ENCODE measurements at regions of chr3 and their contacts with region 1.

Region 1: GRCh38 chr3:45656575-45657363 is 32.4 kb upstream of the SACM1L start:
- DNase-seq: peak; percentile 89
- H3K4me3 Mint-ChIP-seq: no peak overlapping the region
- H3K27ac Mint-ChIP-seq: no peak overlapping the region
- H3K4me1 Mint-ChIP-seq: peaks cover 22% of the 10 kb centered on the region
- H3K27me3 Mint-ChIP-seq: no peaks in the 10 kb centered on the region

Region 2: DNA sequence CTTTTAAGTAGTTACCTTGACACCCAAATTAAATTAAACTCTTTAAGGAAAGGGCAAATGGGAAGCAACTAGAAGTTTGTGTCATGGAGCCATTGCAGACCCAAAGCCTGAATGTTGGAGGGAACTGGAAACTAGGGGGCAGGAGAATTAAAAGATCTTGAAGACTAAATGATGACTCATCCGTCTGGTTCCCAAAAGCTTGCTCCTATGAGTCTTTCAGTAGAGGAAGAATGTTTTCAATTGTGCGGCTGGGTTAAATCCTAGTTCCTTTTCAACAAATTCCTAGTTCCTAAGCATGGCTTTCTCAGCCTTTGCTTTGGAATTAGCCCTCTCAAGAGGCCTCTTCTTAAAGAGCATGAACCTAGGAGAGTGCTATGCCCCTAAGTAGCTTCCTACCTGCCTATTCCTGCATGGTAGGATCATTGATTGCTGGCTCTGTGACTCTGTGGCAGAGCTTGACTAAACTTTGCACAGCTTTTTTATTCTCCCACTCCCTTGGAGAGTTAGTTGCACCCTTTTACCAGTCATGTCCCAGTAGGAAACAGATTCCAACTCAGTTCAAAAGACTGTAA is 613.0 kb before region 1 on chr3:
- CTCF ChIA-PET with region 1: interaction called, 15 read pairs
- POLR2A ChIA-PET with region 1: interaction called, 3 read pairs
- DNase-seq: no peak
- H3K4me3 Mint-ChIP-seq: no peak overlapping the region
- H3K27ac Mint-ChIP-seq: no peak overlapping the region
- H3K4me1 Mint-ChIP-seq: peaks cover 21% of the 10 kb centered on the region
- H3K27me3 Mint-ChIP-seq: peaks cover 25% of the 10 kb centered on the region

Region 3: GRCh38 chr3:45462522-45463265 is 194.1 kb before region 1 on chr3:
- CTCF ChIA-PET with region 1: no interaction called
- POLR2A ChIA-PET with region 1: no interaction called
- DNase-seq: no peak
- H3K4me3 Mint-ChIP-seq: no peak overlapping the region
- H3K27ac Mint-ChIP-seq: no peak overlapping the region
- H3K4me1 Mint-ChIP-seq: peaks cover 19% of the 10 kb centered on the region
- H3K27me3 Mint-ChIP-seq: no peaks in the 10 kb centered on the region

Region 4: GRCh38 chr3:45507820-45508317 is 148.9 kb before region 1 on chr3:
- CTCF ChIA-PET with region 1: interaction called, 48 read pairs
- POLR2A ChIA-PET with region 1: no interaction called
- DNase-seq: no peak
- H3K4me3 Mint-ChIP-seq: no peak overlapping the region
- H3K27ac Mint-ChIP-seq: no peak overlapping the region
- H3K4me1 Mint-ChIP-seq: no peaks in the 10 kb centered on the region
- H3K27me3 Mint-ChIP-seq: no peaks in the 10 kb centered on the region

Region 5: GRCh38 chr3:45546716-45547701 is 109.8 kb before region 1 on chr3:
- CTCF ChIA-PET with region 1: interaction called, 11 read pairs
- POLR2A ChIA-PET with region 1: no interaction called
- DNase-seq: peak; percentile 32
- H3K4me3 Mint-ChIP-seq: no peak overlapping the region
- H3K27ac Mint-ChIP-seq: no peak overlapping the region
- H3K4me1 Mint-ChIP-seq: no peaks in the 10 kb centered on the region
- H3K27me3 Mint-ChIP-seq: no peaks in the 10 kb centered on the region

Region 6: GRCh38 chr3:45593708-45594609 is 62.8 kb before region 1 on chr3:
- CTCF ChIA-PET with region 1: interaction called, 25 read pairs
- POLR2A ChIA-PET with region 1: interaction called, 5 read pairs
- DNase-seq: peak; percentile 79
- H3K4me3 Mint-ChIP-seq: peak overlapping the region; percentile 89
- H3K27ac Mint-ChIP-seq: peak overlapping the region; percentile 81
- H3K4me1 Mint-ChIP-seq: peaks cover 54% of the 10 kb centered on the region
- H3K27me3 Mint-ChIP-seq: peaks cover 5% of the 10 kb centered on the region

Region 7: DNA sequence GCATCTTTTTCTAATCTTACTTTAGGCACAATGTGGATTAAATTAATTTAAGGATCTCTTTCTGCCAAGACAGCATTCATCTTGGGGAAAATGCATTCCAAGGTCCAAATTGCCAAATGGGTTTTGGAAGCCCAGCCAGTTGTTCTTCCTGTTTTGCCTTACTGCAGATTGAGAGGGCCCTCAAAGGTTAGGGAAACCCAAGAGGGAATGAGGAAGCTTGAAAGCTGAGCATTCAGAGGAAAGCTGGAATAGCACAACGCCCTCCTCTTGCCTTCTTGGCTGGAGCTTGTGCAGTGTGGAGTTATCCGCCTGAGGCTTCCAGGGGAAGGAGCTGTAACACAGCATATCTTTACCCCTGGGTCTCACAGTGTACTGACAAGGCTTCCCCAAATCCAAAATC is 14.2 kb after region 1 on chr3:
- CTCF ChIA-PET with region 1: interaction called, 17 read pairs
- POLR2A ChIA-PET with region 1: interaction called, 3 read pairs
- DNase-seq: no peak
- H3K4me3 Mint-ChIP-seq: no peak overlapping the region
- H3K27ac Mint-ChIP-seq: no peak overlapping the region
- H3K4me1 Mint-ChIP-seq: peaks cover 44% of the 10 kb centered on the region
- H3K27me3 Mint-ChIP-seq: no peaks in the 10 kb centered on the region

Region 8: DNA sequence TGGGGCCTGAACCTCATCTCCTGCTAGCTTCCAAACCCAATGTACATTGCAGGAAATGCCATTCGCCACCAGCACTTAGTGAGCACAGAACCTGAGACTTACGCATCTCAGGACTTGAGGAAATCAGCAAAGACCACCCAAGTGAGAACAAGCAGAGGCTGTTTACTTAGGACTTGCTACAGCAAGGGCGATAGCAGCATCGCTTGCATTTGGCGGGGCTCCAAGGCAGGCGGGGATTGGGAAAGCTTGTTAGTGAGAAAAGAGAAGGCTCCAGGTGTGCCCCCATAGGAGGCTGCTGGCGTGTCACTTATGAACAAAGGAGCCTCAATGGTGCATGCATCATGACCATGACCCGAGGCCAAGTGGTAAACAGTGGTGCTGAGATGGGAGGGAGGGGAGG is 119.8 kb after region 1 on chr3:
- CTCF ChIA-PET with region 1: no interaction called
- POLR2A ChIA-PET with region 1: no interaction called
- DNase-seq: no peak
- H3K4me3 Mint-ChIP-seq: no peak overlapping the region
- H3K27ac Mint-ChIP-seq: no peak overlapping the region
- H3K4me1 Mint-ChIP-seq: peaks cover 20% of the 10 kb centered on the region
- H3K27me3 Mint-ChIP-seq: peaks cover 22% of the 10 kb centered on the region

Region 9: GRCh38 chr3:45852828-45853227 is 196.1 kb after region 1 on chr3:
- CTCF ChIA-PET with region 1: no interaction called
- POLR2A ChIA-PET with region 1: no interaction called
- DNase-seq: no peak
- H3K4me3 Mint-ChIP-seq: no peak overlapping the region
- H3K27ac Mint-ChIP-seq: peak overlapping the region; percentile 18
- H3K4me1 Mint-ChIP-seq: peaks cover 27% of the 10 kb centered on the region
- H3K27me3 Mint-ChIP-seq: peaks cover 87% of the 10 kb centered on the region